Common myeloid progenitor, CD34-positive (primary cell): ENCODE measurements at regions of chr9 and their contacts with region 1.

Region 1: GRCh38 chr9:126386088-126386487 is 59.5 kb downstream of the MVB12B start:
- DNase-seq: peak; percentile 25 to 53 (median 39)
- H3K4me3 ChIP-seq: no peak overlapping the region
- H3K27ac ChIP-seq: no peak overlapping the region
- H3K4me1 ChIP-seq: peaks cover 8 to 24% (median 15%) of the 10 kb centered on the region in 4 experiments
- H3K27me3 ChIP-seq: no peaks in the 10 kb centered on the region

Region 2: GRCh38 chr9:126301985-126302603 is 84.0 kb before region 1 on chr9:
- CTCF ChIA-PET with region 1: interaction called, 14 read pairs
- POLR2A ChIA-PET with region 1: no interaction called
- DNase-seq: peak; percentile 71 to 85 (median 84)
- H3K4me3 ChIP-seq: no peak overlapping the region
- H3K27ac ChIP-seq: no peak overlapping the region
- H3K4me1 ChIP-seq: no peaks in the 10 kb centered on the region
- H3K27me3 ChIP-seq: no peaks in the 10 kb centered on the region

Region 3: DNA sequence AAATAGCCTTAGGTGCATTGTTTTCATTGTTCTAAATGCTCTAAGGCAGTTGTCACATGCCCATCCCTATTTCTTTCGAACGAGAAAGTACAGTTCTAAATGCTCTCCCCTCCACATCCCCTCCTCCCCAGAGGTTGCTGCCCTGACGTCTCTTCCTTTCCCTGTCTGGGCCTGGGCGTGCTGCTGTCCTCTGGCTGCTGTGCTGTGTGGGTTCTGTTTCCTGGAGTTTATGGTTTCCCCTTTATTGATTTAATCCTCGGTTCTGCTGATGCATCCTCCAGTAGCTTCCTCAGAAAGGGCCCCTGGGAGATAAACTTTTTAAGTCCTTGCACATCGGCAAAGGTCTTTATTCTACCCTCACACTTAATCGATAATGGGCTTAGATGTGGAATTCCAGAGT is 10.7 kb before region 1 on chr9:
- CTCF ChIA-PET with region 1: interaction called, 13 read pairs
- POLR2A ChIA-PET with region 1: no interaction called
- DNase-seq: peak; percentile 64 to 84 (median 78)
- H3K4me3 ChIP-seq: peak overlapping the region in 4 of 7 experiments; percentile 8 to 51 (median 38)
- H3K27ac ChIP-seq: peak overlapping the region in 1 of 2 experiments; percentile 11
- H3K4me1 ChIP-seq: peaks cover 15 to 48% (median 25%) of the 10 kb centered on the region in 4 experiments
- H3K27me3 ChIP-seq: no peaks in the 10 kb centered on the region